BJ (cell line): ENCODE measurements at regions of chr15 and their contacts with region 1.

Region 1: DNA sequence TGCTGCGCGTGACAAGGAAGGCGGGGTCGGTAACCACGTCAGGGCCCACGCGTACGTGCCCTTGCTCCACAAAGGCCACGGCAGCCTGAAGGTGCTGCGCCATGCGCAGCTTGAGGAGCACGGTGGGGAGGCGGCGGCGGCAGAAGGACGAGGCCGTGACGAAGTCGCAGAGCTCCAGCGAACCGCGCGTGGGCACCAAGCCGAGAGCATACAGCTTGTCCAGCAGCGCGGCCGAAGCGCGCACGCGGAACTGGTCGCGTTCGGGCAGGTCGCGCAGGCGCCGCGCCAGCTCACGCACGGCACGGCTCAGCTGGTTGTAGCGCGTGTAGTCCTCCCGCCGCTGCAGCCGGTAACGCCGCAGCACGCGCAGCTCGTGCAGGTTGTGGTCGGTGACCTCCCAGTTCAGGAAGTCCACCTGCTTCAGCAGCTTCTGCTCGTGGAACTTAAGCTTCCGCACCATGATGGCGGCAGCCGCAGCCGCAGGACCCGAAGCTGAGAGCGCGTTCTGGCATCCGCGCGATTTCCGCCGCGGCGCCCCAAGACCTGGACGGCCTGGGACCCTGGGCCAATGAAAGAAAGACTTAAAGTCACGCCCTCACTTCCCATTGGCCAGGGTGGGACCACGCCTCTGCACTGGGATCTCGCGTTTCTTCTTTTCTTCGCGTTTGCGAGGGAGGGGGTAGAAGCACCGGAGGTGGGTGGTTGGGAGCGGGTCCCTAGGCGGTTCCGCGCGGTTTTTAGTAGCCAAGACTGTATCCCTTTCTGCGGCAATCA is at the start of gene IMP3:
- DNase-seq: peak; percentile 86
- H3K4me3 ChIP-seq: peak within 1 kb of the TSS; percentile 84
- H3K27me3 ChIP-seq: no peaks in the 10 kb centered on the region
- CTCF ChIP-seq: no peak
- polyA plus RNA-seq, gene IMP3: 36.6 and 37.6 TPM in 2 replicates

Region 2: GRCh38 chr15:75625542-75626347 is 14.2 kb before region 1 on chr15 and contains the start of gene SNUPN:
- CTCF ChIA-PET with region 1: interaction called, 19 read pairs
- POLR2A ChIA-PET with region 1: no interaction called
- DNase-seq: peak; percentile 41
- H3K4me3 ChIP-seq: peak within 1 kb of the TSS; percentile 95
- H3K27me3 ChIP-seq: no peaks in the 10 kb centered on the region
- CTCF ChIP-seq: no peak
- polyA plus RNA-seq, gene SNUPN: 25.4 and 33.9 TPM in 2 replicates

Region 3: GRCh38 chr15:75666823-75667501 is 27.1 kb after region 1 on chr15:
- CTCF ChIA-PET with region 1: interaction called, 18 read pairs
- POLR2A ChIA-PET with region 1: no interaction called
- DNase-seq: peak; percentile 98
- H3K4me3 ChIP-seq: no peak overlapping the region
- H3K27me3 ChIP-seq: no peaks in the 10 kb centered on the region
- CTCF ChIP-seq: no peak

Region 4: DNA sequence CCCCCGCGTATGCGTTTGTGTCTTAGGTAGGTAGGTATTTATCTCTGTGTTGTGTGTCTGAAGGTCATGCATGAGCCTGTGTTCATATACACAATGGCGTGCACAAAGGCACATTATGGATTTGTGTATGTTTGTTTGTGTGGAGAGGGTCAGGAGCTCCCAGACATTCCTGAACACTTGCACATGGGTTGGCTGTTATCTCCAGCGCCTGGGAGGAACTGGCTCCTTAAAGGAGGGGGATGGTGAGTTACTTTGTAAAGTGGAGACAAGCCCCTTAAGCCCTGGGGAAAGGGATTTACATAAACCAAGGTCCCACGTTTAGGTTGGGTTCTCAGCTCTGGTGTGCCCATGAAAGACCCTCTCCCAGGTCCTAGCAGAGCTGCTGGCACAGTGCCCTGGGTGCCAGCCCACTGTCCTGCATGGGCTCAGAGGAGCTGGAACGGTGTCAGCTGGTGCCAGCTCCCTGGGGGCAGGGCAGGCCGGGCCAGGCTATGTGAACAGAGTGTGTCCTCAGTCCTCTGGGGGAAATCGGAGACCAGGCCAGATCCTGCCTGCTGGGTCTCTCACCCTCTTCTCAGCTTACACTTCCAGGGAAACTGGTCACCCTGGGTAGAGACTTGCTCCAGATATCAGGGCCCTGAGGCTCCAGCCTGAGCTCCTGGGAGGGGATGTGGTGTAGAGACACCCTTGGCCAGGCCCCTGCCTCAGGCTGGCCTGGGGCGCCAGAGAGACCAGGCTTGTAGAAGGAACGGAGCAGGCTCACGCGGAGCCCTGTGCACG is 32.9 kb after region 1 on chr15:
- CTCF ChIA-PET with region 1: interaction called, 18 read pairs
- POLR2A ChIA-PET with region 1: no interaction called
- DNase-seq: no peak
- H3K4me3 ChIP-seq: no peak overlapping the region
- H3K27me3 ChIP-seq: no peaks in the 10 kb centered on the region
- CTCF ChIP-seq: no peak

Region 5: GRCh38 chr15:75684642-75685041 is 44.7 kb after region 1 on chr15:
- CTCF ChIA-PET with region 1: interaction called, 30 read pairs
- POLR2A ChIA-PET with region 1: no interaction called
- DNase-seq: no peak
- H3K4me3 ChIP-seq: no peak overlapping the region
- H3K27me3 ChIP-seq: no peaks in the 10 kb centered on the region
- CTCF ChIP-seq: no peak